Calu3 (cell line): ENCODE measurements at regions of chr4 and their contacts with region 1.

Region 1: DNA sequence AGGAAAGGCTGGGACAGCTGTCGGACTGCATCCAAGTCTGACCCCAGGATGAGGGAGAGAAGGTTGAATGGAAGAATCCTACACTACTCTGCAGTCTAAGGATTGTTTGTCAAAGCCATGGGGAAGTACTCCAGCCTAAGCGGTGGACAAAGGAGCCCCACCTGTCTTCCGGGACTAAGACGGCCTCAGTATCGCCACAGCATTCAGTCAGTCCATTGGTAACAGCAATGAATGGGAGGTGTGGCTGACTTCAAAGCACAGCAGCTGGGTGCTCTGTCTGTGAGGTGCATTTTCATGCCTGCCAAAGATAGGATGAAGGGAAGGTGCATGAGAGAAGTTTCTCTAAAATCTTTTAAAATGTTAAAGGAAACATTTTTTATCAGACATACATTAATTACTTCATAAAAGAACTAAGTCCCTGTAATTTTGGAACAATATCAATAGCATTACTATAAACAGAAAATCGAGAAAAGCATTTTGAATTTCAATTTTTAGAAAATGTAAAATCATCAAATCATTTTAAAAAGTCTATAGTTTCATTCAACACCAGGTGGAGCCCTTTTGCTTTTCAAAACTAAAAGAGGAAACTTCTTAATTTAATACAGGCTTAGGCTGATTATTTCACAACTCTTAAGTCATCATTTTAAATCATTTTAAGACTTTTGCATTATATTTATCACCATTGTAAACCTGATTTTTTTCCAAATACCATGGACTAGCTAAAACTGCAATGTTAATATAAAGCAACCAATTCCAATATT is 27.6 kb upstream of the INTU start:
- DNase-seq: no peak
- H3K4me3 Mint-ChIP-seq: no peak overlapping the region
- H3K27ac Mint-ChIP-seq: no peak overlapping the region
- H3K4me1 Mint-ChIP-seq: no peaks in the 10 kb centered on the region
- H3K27me3 Mint-ChIP-seq: no peaks in the 10 kb centered on the region
- CTCF ChIP-seq: no peak

Region 2: GRCh38 chr4:127732613-127733328 is 127.6 kb after region 1 on chr4:
- CTCF ChIA-PET with region 1: interaction called, 20 read pairs
- intact Hi-C with region 1: loop called (anchors 1 kb)
- DNase-seq: peak; percentile 2
- H3K4me3 Mint-ChIP-seq: no peak overlapping the region
- H3K27ac Mint-ChIP-seq: no peak overlapping the region
- H3K4me1 Mint-ChIP-seq: no peaks in the 10 kb centered on the region
- H3K27me3 Mint-ChIP-seq: no peaks in the 10 kb centered on the region
- CTCF ChIP-seq: peak; percentile 39

Region 3: GRCh38 chr4:128244379-128244778 is 639.2 kb after region 1 on chr4:
- CTCF ChIA-PET with region 1: no interaction called
- intact Hi-C with region 1: no loop called
- DNase-seq: no peak
- H3K4me3 Mint-ChIP-seq: no peak overlapping the region
- H3K27ac Mint-ChIP-seq: no peak overlapping the region
- H3K4me1 Mint-ChIP-seq: no peaks in the 10 kb centered on the region
- H3K27me3 Mint-ChIP-seq: no peaks in the 10 kb centered on the region
- CTCF ChIP-seq: no peak

Region 4: GRCh38 chr4:129098531-129099001 is 1493.4 kb after region 1 on chr4:
- CTCF ChIA-PET with region 1: no interaction called
- intact Hi-C with region 1: no loop called
- DNase-seq: no peak
- H3K4me3 Mint-ChIP-seq: no peak overlapping the region
- H3K27ac Mint-ChIP-seq: no peak overlapping the region
- H3K4me1 Mint-ChIP-seq: no peaks in the 10 kb centered on the region
- H3K27me3 Mint-ChIP-seq: no peaks in the 10 kb centered on the region
- CTCF ChIP-seq: no peak